Colonic mucosa (tissue), 4 donors: ENCODE measurements at regions of chr16 and their contacts with region 1.

Region 1: DNA sequence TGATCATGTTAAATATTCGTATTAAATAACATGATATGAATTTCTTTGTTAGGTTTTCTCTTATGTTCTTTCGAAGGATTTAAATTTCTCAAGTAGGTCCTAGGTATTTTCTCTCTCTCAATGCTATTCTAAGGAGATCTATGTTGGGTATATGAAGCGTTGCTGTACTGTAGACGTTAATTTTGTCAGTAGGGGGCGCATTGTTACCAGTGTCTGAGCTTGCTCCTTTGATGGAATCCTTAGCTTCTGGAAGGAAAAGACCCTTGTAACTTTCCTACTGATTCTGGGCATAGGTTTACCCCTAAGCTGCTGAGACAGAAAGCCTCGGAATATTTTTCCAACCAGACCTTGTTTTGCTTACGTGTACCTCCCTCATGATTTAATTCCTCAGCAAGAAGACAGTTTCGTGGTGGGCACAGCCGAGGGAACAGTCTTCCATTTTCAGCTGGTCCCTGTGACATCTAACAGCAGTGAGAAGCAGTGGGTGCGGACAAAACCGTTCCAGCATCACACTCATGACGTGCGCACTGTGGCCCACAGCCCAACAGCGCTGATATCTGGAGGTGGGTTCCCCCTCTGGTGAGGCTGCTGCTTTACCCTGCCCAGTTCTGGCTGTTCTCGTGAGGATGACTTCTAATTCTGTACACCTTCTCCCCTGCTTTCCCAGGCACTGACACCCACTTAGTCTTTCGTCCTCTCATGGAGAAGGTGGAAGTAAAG is 17.9 kb downstream of the UTP4 start:
- DNase-seq: peak; percentile 74
- H3K4me3 ChIP-seq: no peak overlapping the region
- H3K27ac ChIP-seq: no peak overlapping the region
- H3K4me1 ChIP-seq: no peaks in the 10 kb centered on the region
- H3K27me3 ChIP-seq: no peaks in the 10 kb centered on the region
- CTCF ChIP-seq: peak; percentile 79

Region 2: GRCh38 chr16:69286941-69287713 is 136.8 kb after region 1 on chr16:
- intact Hi-C with region 1: loop called (anchors 2 kb)
- DNase-seq: peak; percentile 67
- H3K4me3 ChIP-seq: no peak overlapping the region
- H3K27ac ChIP-seq: no peak overlapping the region
- H3K4me1 ChIP-seq: no peaks in the 10 kb centered on the region
- H3K27me3 ChIP-seq: no peaks in the 10 kb centered on the region
- CTCF ChIP-seq: peak; percentile 59